Tibial artery (tissue), 4 donors: ENCODE measurements at regions of chr1 and their contacts with region 1.

Region 1: GRCh38 chr1:109263597-109264398 is 14.5 kb downstream of the CELSR2 start:
- DNase-seq: peak; percentile 79 to 86
- H3K4me3 ChIP-seq: no peak overlapping the region
- H3K27ac ChIP-seq: no peak overlapping the region
- H3K4me1 ChIP-seq: peaks cover 0 to 15% (median 3%) of the 10 kb centered on the region in 4 donors
- H3K27me3 ChIP-seq: no peaks in the 10 kb centered on the region
- CTCF ChIP-seq: peak; percentile 94 to 99

Region 2: DNA sequence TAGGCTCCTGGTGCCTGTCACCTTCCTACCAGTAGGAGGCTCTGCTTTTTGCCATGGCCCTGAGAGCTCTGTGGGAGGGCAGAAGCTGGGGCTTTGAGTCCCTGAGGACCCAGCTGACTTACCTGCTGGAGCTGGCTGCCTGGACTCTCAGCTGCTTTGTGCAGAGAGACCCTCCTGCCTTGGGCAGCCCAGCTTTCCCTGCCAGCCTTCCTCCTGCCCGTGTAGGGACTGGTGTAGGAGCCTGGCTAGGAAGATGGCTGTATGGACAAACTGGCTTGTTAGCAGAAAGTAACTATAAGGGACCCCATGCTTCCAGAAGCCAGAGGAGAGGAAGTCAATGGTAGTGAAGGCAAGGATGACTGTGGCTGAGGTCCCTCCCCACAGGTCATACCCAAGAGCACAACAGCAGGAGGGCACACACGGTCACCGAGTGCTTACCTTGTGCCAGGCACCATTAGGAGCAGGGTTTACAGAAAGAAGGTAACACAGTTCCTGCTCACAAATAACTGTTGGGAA is 24.2 kb before region 1 on chr1:
- intact Hi-C with region 1: no loop called
- DNase-seq: no peak
- H3K4me3 ChIP-seq: no peak overlapping the region
- H3K27ac ChIP-seq: no peak overlapping the region
- H3K4me1 ChIP-seq: peaks cover 0 to 31% (median 22%) of the 10 kb centered on the region in 4 donors
- H3K27me3 ChIP-seq: peaks cover 0 to 2% of the 10 kb centered on the region in 2 donors
- CTCF ChIP-seq: peak; percentile 19 to 25

Region 3: DNA sequence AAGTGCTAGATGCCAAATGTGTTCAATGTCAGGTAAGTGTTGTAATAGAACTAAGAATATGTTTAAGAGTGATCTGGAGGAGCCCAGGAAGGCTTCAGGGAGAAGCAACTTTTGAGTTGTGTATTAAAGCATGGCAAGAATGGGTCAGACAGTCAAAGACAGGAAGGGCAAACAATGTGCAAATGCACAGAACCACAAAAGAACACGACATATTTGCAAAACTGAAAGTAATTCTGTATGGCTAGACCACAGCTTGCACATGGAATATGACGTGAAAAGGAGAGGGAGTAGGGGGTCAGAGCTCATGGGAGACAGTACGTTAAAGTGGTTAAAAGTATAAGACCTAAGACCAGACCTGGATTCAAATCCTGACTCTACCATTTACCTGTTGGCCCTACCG is 141.0 kb after region 1 on chr1:
- intact Hi-C with region 1: loop called (anchors 5 kb)
- DNase-seq: no peak
- H3K4me3 ChIP-seq: no peak overlapping the region
- H3K27ac ChIP-seq: no peak overlapping the region
- H3K4me1 ChIP-seq: peaks cover 0 to 11% (median 3%) of the 10 kb centered on the region in 4 donors
- H3K27me3 ChIP-seq: no peaks in the 10 kb centered on the region
- CTCF ChIP-seq: no peak

Region 4: GRCh38 chr1:109483672-109484518 is 220.1 kb after region 1 on chr1 and contains the start of gene ATXN7L2:
- intact Hi-C with region 1: loop called (anchors 10 kb)
- DNase-seq: peak; percentile 88 to 96
- H3K4me3 ChIP-seq: peak within 1 kb of the TSS; percentile 60 to 82
- H3K27ac ChIP-seq: peak within 1 kb of the TSS; percentile 89 to 97
- H3K4me1 ChIP-seq: peaks cover 0 to 19% (median 16%) of the 10 kb centered on the region in 4 donors
- H3K27me3 ChIP-seq: no peaks in the 10 kb centered on the region
- CTCF ChIP-seq: no peak